Left lung (tissue), 14 donors: ENCODE measurements at regions of chr16 and their contacts with region 1.

Region 1: DNA sequence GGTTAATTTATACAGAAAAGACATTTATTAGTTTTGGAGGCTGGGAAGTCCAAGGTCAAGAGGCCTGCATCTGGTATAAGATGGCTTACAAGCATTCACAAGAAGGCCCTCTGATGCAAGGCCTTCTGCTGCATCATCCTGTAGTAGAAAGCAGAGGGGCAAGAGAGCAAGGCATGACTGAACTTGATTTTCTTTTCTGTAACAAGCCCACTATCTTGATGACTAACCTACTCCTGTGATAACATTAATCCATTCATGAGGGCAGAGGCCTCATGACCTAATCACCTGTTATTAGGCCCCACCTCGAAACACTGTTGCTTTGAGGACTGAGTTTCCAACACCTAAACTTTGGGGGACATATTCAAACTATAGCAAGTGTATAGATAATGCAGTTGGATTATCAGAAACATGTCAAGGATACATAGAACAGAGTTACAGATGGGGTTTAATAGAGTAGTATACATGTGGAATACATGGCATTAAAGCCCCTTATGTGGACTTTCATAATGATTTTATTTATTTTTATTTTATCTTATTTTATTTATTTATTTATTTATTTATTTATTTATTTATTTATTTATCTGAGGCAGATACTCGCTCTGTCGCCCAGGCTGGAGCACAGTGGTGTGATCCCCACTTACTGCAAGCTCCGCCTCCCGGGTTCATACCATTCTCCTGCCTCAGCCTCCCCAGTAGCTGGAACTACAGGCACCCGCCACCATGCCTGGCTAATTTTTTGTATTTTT is 88.2 kb downstream of the CHD9 start:
- DNase-seq: no peak
- ATAC-seq: no peak
- H3K4me3 ChIP-seq: no peak overlapping the region
- H3K27ac ChIP-seq: no peak overlapping the region
- H3K4me1 ChIP-seq: no peaks in the 10 kb centered on the region
- H3K27me3 ChIP-seq: no peaks in the 10 kb centered on the region
- CTCF ChIP-seq: no peak

Region 2: GRCh38 chr16:53207810-53208752 is 65.1 kb after region 1 on chr16:
- intact Hi-C with region 1: loop called in 1 of 2 experiments (anchors 10 kb)
- DNase-seq: peak in 3 of 4 donors; percentile 37 to 90 (median 83)
- ATAC-seq: peak; percentile 95
- H3K4me3 ChIP-seq: peak overlapping the region; percentile 27 to 37
- H3K27ac ChIP-seq: peak overlapping the region; percentile 86 to 90
- H3K4me1 ChIP-seq: peaks cover 26 to 59% of the 10 kb centered on the region in 2 donors
- H3K27me3 ChIP-seq: no peaks in the 10 kb centered on the region
- CTCF ChIP-seq: peak; percentile 30 to 31